GM18951 (cell line): ENCODE measurements at regions of chr16 and their contacts with region 1.

Region 1: DNA sequence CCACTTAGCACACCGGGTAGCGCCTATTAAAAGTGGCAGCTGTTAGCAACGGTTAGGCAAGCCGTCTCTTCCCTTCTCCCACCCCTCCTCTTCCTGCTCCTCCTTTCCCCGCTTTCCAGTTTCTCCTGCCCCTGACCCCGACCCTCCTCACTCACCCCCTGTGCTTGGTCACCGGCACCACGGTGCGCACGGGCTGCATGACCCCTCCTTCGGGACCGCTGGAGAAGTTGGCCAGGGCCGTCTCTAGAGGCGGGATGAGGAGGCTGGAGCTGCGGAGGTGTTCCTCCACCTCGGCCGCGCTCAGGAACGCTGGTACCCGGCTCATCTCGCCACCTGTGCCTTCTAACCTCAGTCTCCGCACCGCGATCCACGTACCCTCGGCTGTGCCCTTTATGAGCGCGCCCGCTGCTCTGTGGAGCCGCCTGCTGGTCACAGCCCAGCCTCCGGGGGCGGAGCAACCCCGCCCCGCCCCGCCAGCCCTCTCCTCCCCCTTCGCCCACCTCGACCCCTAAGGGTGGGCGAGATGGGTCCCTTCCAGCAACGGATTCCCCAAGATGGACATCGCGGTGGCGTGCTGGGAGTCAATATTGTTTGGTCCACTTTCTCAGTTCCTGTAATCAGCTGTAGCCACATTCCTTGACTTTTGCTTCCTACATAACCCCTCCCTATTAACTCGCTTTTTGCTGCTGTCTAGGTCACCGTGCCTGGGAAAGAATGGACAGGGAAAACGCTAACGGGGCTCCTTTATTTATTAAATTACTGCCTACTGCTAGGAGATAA is at the start of gene CRYM:
- POLR2A ChIP-seq: peak; percentile 35

Region 2: GRCh38 chr16:21172650-21173049 is 105.5 kb before region 1 on chr16:
- in situ Hi-C with region 1: loop called (anchors 5 kb)
- POLR2A ChIP-seq: no peak

Region 3: DNA sequence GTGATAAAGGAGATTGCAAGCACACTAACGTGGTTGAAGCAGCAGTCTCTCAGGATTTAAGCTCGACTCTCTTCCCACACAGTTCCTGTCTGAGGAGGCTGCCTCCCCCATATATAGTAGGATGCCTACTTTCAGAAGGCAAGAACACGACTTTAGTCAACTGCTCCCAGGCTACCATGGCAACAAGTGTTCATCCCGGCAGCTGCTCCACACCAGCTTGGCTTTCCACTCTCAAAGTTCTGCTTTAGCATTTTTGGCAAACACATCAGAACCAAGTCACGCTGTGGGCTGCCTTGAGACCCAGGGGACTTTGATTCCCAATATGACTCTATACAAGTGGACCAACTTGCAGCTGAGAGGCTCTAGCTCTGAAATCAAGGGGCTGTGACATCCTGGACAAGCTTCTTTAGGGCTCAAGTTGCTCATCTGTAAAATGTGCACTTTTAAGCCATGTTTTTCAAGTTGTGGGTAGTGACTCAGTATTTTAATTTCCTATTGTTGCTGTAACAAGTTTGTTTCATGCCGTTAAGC is 83.3 kb before region 1 on chr16:
- in situ Hi-C with region 1: loop called (anchors 10 kb)
- POLR2A ChIP-seq: no peak

Region 4: DNA sequence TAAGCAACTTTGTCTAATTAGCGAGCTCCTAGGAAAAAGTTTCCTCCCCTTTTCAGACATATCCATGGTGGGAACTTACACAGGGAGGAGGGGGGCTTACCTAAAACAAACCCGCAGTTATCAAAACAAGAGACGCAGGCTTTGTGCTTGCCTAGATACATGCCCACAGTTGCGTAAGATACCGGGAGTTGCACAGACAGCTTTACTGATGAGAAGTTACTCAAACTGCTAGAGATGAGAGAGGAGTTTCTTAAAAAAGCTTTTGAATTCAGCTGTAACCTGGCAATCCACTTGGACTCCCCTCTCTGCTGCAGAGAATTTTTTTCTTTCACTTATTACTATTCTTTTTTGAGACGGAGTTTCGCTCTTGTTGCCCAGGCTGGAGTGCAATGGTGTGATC is 60.0 kb before region 1 on chr16:
- in situ Hi-C with region 1: no loop called
- POLR2A ChIP-seq: no peak